ENCODE measurements at regions of chr14 and their contacts with region 1.

Region 1: GRCh38 chr14:23057757-23058653 is 685 bp upstream of the CDH24 start:
- DNase-seq: peak; percentile 87
- H3K4me3 ChIP-seq: peak overlapping the region; percentile 28 to 62 (median 49)
- H3K27ac ChIP-seq: peak overlapping the region; percentile 48
- H3K4me1 ChIP-seq: peaks cover 31% of the 10 kb centered on the region
- H3K27me3 ChIP-seq: no peaks in the 10 kb centered on the region
- CTCF ChIP-seq: peak; percentile 97
- POLR2A ChIP-seq: peak; percentile 33

Region 2: DNA sequence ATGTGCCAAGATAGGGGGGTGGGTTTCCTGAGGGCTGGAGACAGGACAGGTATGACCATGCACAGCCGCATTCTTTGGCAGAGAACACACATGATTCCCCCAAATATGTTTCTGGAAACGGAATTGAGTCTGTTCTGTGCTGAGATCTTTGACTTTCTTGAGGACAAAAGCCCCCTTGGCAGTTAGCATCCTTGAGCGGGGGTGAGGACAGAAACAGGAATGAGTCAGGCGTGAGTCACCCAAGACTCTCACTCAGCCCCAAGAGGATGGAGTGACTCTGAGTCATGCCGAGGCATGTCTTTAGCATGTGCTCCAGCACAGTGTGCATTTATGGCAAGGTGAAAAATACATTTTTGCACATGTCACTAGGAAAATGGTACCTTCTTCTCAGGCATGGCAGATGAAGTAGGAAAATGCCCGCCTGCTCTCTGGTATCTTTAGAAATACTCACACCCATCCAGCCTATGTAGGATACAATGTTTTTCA is 521.1 kb before region 1 on chr14:
- CTCF ChIA-PET with region 1: no interaction called
- POLR2A ChIA-PET with region 1: no interaction called
- dilution Hi-C with region 1: no loop called
- intact Hi-C with region 1: no loop called
- DNase-seq: peak; percentile 98
- H3K4me3 ChIP-seq: no peak overlapping the region
- H3K27ac ChIP-seq: peak overlapping the region; percentile 57
- H3K4me1 ChIP-seq: peaks cover 38% of the 10 kb centered on the region
- H3K27me3 ChIP-seq: no peaks in the 10 kb centered on the region
- CTCF ChIP-seq: no peak
- POLR2A ChIP-seq: no peak

Region 3: DNA sequence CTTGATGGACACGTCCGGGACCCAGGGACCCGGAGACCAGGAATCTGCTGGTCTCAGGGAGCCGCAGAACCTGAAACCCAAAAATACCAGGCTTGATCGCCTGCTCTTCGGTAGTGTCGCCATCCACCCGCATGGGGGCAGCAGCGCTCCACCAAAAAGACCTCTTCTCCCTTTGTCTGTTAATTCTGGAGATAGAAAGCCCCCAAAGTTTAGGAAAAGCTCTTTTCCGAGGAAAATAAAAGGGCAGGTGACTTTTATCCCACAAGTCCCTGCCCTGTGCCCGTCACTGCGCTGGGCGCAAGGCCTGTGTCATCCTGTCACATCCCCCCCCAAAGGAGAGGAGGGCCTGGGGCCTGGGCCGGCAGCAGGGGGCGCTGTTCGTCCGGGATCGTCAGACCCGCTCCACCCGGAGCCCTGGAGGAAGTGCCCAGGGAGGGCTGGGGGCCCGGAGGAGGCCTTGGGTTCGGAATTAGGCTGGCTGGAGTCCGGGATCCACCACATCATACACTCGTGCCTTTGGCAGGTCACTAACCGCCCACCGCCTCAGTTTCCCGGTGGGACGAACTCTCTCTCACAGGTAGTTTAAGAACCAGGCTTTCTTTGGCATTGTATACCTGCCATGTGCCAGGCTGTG is 500.9 kb before region 1 on chr14:
- CTCF ChIA-PET with region 1: interaction called, 9 read pairs
- POLR2A ChIA-PET with region 1: no interaction called
- dilution Hi-C with region 1: no loop called
- intact Hi-C with region 1: loop called (anchors 1 kb)
- DNase-seq: peak; percentile 71
- H3K4me3 ChIP-seq: peak overlapping the region in 2 of 3 experiments; percentile 10 to 14
- H3K27ac ChIP-seq: peak overlapping the region; percentile 88
- H3K4me1 ChIP-seq: peaks cover 52% of the 10 kb centered on the region
- H3K27me3 ChIP-seq: no peaks in the 10 kb centered on the region
- CTCF ChIP-seq: peak; percentile 84 to 99
- POLR2A ChIP-seq: no peak

Region 4: DNA sequence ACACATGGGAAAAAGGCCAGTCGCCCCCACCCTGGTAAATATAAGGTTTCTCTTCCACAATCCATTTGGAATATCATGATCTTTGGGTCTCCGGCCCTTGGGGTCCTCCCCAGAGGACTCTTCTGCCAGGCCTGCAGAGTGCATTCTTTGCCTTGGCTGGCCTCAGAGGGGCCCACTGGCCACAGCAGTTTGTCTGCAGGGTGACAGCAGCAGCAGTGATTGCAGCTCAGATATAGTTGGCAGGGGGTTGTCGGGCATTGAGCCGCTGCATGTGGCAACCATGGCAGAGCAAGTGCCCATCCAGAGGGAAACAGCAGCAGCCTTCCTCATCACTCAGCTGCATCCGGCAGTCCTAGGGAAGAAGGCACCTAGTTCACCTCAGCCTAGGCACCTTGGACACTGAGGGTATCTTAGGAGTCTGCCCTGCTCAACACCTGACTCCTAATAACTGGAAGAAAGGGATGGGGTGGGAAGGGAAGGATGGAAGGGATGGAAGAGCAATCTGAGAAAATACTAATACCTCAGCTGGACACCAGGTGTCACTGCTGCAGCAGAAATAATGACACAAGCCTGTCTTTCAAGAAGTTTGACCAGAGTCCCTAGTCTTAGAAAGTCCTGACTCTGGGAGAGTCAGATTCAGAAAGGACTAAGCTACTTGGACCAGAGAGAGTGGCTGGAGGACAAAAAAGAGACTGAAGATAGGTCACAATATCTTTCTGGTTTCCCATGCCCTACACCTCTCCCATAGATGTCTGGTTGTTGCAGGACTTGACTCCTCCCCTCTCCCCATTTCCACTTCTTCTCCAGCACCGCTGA is 84.6 kb before region 1 on chr14:
- CTCF ChIA-PET with region 1: interaction called, 34 read pairs
- POLR2A ChIA-PET with region 1: no interaction called
- dilution Hi-C with region 1: no loop called
- intact Hi-C with region 1: loop called (anchors 1 kb)
- DNase-seq: peak; percentile 72
- H3K4me3 ChIP-seq: no peak overlapping the region
- H3K27ac ChIP-seq: no peak overlapping the region
- H3K4me1 ChIP-seq: peaks cover 31% of the 10 kb centered on the region
- H3K27me3 ChIP-seq: no peaks in the 10 kb centered on the region
- CTCF ChIP-seq: peak; percentile 53 to 54
- POLR2A ChIP-seq: no peak

Region 5: GRCh38 chr14:23025151-23025814 is 32.7 kb before region 1 on chr14:
- CTCF ChIA-PET with region 1: interaction called, 11 read pairs
- POLR2A ChIA-PET with region 1: no interaction called
- dilution Hi-C with region 1: no loop called
- intact Hi-C with region 1: no loop called
- DNase-seq: no peak
- H3K4me3 ChIP-seq: no peak overlapping the region
- H3K27ac ChIP-seq: no peak overlapping the region
- H3K4me1 ChIP-seq: peaks cover 4% of the 10 kb centered on the region
- H3K27me3 ChIP-seq: no peaks in the 10 kb centered on the region
- CTCF ChIP-seq: no peak
- POLR2A ChIP-seq: no peak

Region 6: GRCh38 chr14:23068476-23069412 is 10.7 kb after region 1 on chr14:
- CTCF ChIA-PET with region 1: interaction called, 45 read pairs
- POLR2A ChIA-PET with region 1: interaction called, 8 read pairs
- dilution Hi-C with region 1: no loop called
- intact Hi-C with region 1: no loop called
- DNase-seq: peak; percentile 97
- H3K4me3 ChIP-seq: no peak overlapping the region
- H3K27ac ChIP-seq: peak overlapping the region; percentile 35
- H3K4me1 ChIP-seq: peaks cover 28% of the 10 kb centered on the region
- H3K27me3 ChIP-seq: no peaks in the 10 kb centered on the region
- CTCF ChIP-seq: peak; percentile 93 to 100
- POLR2A ChIP-seq: no peak

Region 7: GRCh38 chr14:23113431-23114119 is 55.6 kb after region 1 on chr14:
- CTCF ChIA-PET with region 1: interaction called, 16 read pairs
- POLR2A ChIA-PET with region 1: no interaction called
- dilution Hi-C with region 1: no loop called
- intact Hi-C with region 1: loop called (anchors 1 kb)
- DNase-seq: no peak
- H3K4me3 ChIP-seq: no peak overlapping the region
- H3K27ac ChIP-seq: no peak overlapping the region
- H3K4me1 ChIP-seq: peaks cover 13% of the 10 kb centered on the region
- H3K27me3 ChIP-seq: peaks cover 9 to 10% of the 10 kb centered on the region in 2 experiments
- CTCF ChIP-seq: no peak
- POLR2A ChIP-seq: no peak